SK-N-SH (cell line): ENCODE measurements at regions of chr3 and their contacts with region 1.

Region 1: DNA sequence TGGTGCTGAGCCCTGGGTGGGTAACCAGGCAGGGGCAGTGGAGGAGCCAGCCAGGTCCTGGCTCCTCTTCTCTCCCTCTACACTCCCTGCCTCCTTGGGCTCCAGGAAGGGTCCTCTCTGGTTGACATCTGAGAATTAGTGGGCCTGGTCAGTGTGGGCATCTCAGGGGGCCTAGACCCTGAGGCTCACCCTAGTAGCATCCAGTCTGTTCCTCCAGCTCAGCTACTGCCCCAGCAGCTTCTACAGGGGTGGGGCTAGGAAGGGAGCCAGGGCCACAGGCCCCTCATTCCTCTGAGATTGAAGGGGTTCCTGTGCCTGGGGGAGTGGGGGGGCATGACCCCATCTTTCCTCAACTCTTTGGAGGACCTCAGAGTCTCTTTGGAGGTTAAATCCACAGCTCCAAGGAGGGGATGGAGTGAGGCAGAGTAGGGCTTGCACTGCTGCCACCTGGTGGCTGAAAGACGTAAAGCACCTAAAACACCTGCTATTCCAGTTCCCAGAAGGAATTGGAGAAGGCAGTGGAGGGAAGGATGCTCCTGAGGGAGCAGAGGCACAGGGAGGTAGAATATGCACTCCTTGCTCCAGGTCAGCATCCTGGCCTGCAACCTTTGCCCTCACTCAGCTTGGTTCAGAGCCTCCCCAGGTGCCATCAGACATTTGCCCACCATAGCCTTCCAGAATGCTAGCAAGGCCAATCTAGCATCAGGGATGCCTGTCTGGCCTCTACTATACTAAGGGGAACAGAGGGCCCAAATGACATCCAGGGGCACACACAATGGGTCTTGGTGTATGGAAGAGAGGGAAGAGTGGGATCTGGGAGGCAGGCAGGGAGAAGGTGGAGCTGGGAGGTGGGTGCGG is 25.1 kb downstream of the C3orf18 start:
- DNase-seq: peak; percentile 89
- H3K4me3 ChIP-seq: no peak overlapping the region; a peak in 1 of 4 replicates
- H3K27ac ChIP-seq: no peak overlapping the region; a peak in 1 of 4 replicates
- H3K4me1 ChIP-seq: peaks cover 0 to 43% of the 10 kb centered on the region in 2 experiments; a peak in 1 of 4 replicates
- H3K27me3 ChIP-seq: peaks cover 6% of the 10 kb centered on the region; the same call in 1 of the 2 replicates
- CTCF ChIP-seq: peak; percentile 86
- EP300 ChIP-seq: no peak
- RAD21 ChIP-seq: peak; percentile 88

Region 2: GRCh38 chr3:50370594-50370993 is 171.8 kb before region 1 on chr3:
- CTCF ChIA-PET with region 1: interaction called, 35 read pairs
- POLR2A ChIA-PET with region 1: no interaction called
- DNase-seq: peak; percentile 78
- H3K4me3 ChIP-seq: no peak overlapping the region
- H3K27ac ChIP-seq: peak overlapping the region in 1 of 2 experiments; percentile 56; a peak in 2 of 4 replicates
- H3K4me1 ChIP-seq: peaks cover 0 to 78% of the 10 kb centered on the region in 2 experiments; a peak in 2 of 4 replicates
- H3K27me3 ChIP-seq: no peaks in the 10 kb centered on the region
- CTCF ChIP-seq: peak; percentile 31
- EP300 ChIP-seq: no peak
- RAD21 ChIP-seq: peak; percentile 72

Region 3: GRCh38 chr3:50480471-50480870 is 61.9 kb before region 1 on chr3:
- CTCF ChIA-PET with region 1: interaction called, 10 read pairs
- POLR2A ChIA-PET with region 1: no interaction called
- DNase-seq: no peak
- H3K4me3 ChIP-seq: no peak overlapping the region
- H3K27ac ChIP-seq: peak overlapping the region in 1 of 2 experiments; percentile 60; a peak in 2 of 4 replicates
- H3K4me1 ChIP-seq: peaks cover 0 to 70% of the 10 kb centered on the region in 2 experiments; a peak in 1 of 4 replicates
- H3K27me3 ChIP-seq: no peaks in the 10 kb centered on the region
- CTCF ChIP-seq: no peak
- EP300 ChIP-seq: no peak
- RAD21 ChIP-seq: no peak

Region 4: DNA sequence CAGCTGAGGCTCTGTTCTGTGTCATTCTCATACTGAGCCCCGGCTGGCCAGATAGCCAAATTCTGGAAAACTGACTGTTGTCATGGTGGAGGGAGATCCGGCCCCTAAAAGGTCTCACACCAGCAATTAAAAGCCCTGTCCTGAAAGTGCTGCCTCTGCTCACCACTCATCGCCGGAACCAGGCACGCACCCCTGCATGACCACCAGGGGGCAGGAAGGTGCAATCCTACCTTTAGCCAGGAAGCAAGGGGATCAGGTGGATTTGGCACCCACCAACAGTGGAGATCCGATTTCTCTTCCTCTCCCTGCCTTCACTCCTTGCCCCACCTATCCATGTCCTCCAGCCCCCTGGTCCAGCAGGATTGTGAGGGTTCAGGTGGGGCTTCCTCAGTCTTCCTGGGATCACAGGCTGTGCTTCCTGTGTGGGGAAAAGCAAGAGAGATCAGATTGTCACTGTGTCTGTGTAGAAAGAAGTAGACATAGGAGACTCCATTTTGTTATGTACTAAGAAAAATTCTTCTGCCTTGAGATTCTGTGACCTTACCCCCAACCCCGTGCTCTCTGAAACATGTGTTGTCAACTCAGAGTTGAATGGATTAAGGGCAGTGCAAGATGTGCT is 22.8 kb before region 1 on chr3:
- CTCF ChIA-PET with region 1: interaction called, 114 read pairs
- POLR2A ChIA-PET with region 1: no interaction called
- DNase-seq: peak; percentile 79
- H3K4me3 ChIP-seq: peak overlapping the region in 1 of 2 experiments; percentile 26; a peak in 1 of 4 replicates
- H3K27ac ChIP-seq: no peak overlapping the region
- H3K4me1 ChIP-seq: peaks cover 0 to 61% of the 10 kb centered on the region in 2 experiments; a peak in 2 of 4 replicates
- H3K27me3 ChIP-seq: peaks cover 21% of the 10 kb centered on the region; the same call in 1 of the 2 replicates
- CTCF ChIP-seq: peak; percentile 86
- EP300 ChIP-seq: no peak
- RAD21 ChIP-seq: peak; percentile 74

Region 5: DNA sequence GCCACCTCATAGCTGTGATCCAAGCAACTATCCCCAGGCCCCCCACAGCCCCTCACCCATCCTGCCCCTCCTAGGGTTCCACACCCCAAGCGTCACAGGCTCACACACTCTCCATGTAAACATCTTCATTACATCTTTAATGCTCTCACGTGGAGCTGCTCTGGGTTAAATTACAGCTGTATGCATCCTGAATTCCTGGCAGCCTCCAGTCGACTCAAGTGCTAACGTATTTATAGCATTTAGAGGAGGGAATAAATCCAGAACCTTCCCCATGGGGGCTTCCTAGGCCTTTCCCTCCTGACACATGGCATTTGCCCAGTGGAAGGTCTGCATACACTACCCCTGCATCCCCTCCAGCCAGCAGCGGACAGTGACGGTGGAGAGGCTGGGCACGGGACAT is 15.5 kb after region 1 on chr3:
- CTCF ChIA-PET with region 1: interaction called, 25 read pairs
- POLR2A ChIA-PET with region 1: no interaction called
- DNase-seq: no peak
- H3K4me3 ChIP-seq: no peak overlapping the region
- H3K27ac ChIP-seq: no peak overlapping the region
- H3K4me1 ChIP-seq: peaks cover 0 to under 1% of the 10 kb centered on the region in 2 experiments; a peak in 1 of 4 replicates
- H3K27me3 ChIP-seq: no peaks in the 10 kb centered on the region
- CTCF ChIP-seq: no peak
- EP300 ChIP-seq: no peak
- RAD21 ChIP-seq: no peak